SK-N-SH (cell line): ENCODE measurements at regions of chr2 and their contacts with region 1.

Region 1: GRCh38 chr2:64915510-64915900 is 73.7 kb upstream of the SLC1A4 start:
- DNase-seq: no peak
- H3K4me3 ChIP-seq: no peak overlapping the region
- H3K27ac ChIP-seq: no peak overlapping the region
- H3K4me1 ChIP-seq: no peaks in the 10 kb centered on the region
- H3K27me3 ChIP-seq: no peaks in the 10 kb centered on the region
- CTCF ChIP-seq: no peak
- EP300 ChIP-seq: no peak
- RAD21 ChIP-seq: no peak

Region 2: GRCh38 chr2:64523666-64524603 is 391.6 kb before region 1 on chr2 and contains the start of gene AFTPH:
- CTCF ChIA-PET with region 1: interaction called, 10 read pairs
- POLR2A ChIA-PET with region 1: no interaction called
- DNase-seq: peak; percentile 99
- H3K4me3 ChIP-seq: peak within 1 kb of the TSS; percentile 88 to 94
- H3K27ac ChIP-seq: peak within 1 kb of the TSS; percentile 71 to 92
- H3K4me1 ChIP-seq: peaks cover 0 to 6% of the 10 kb centered on the region in 2 experiments; a peak in 2 of 4 replicates
- H3K27me3 ChIP-seq: peaks cover 9% of the 10 kb centered on the region; the same call in 1 of the 2 replicates
- CTCF ChIP-seq: no peak
- EP300 ChIP-seq: 0 out of 4 replicates have a peak, but pooled peaks of 1 of the 2 experiments have one; percentile 7
- RAD21 ChIP-seq: no peak
- polyA plus RNA-seq, gene AFTPH: 7.4 and 9.8 TPM in 2 replicates

Region 3: GRCh38 chr2:64622443-64623241 is 292.9 kb before region 1 on chr2:
- CTCF ChIA-PET with region 1: no interaction called
- POLR2A ChIA-PET with region 1: no interaction called
- DNase-seq: no peak
- H3K4me3 ChIP-seq: no peak overlapping the region
- H3K27ac ChIP-seq: no peak overlapping the region
- H3K4me1 ChIP-seq: peaks cover 0 to 14% of the 10 kb centered on the region in 2 experiments; a peak in 1 of 4 replicates
- H3K27me3 ChIP-seq: no peaks in the 10 kb centered on the region
- CTCF ChIP-seq: no peak
- EP300 ChIP-seq: no peak
- RAD21 ChIP-seq: no peak

Region 4: DNA sequence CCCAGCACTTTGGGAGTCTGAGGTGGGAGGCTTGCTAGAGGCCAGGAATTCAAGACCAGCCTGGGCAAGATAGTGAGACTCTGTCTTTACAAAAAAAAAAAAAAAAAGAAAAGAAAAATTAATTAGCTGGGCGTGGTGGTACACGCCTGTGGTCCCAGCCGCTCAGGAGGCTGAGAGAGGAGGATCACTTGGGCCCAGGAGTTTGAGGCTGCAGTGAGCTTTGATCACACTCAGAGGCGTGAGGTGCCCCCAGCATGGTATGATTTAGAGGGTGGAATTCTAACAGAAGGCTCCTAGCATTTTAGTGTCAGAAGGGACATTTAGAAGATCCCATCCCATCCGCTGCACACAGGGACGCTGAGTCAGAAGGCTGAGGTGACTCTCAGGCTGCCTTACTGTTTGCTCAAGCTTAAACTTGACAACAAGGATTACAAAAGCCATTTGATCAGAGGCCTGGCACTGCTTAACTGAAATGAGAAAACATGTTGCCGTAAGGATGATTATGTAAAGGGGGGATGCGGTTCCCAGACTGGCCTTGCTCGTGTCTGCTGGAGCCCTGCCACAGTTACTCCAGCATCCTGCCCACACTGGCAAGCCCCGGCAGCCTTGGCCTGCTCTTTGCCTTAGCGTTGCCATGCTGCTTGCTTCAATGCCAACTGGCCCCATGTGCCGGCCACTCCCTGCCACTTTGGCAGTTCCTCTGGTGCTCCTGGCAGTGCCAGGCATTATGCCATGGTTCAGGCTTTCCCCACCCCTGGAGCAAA is 28.1 kb after region 1 on chr2:
- CTCF ChIA-PET with region 1: interaction called, 23 read pairs
- POLR2A ChIA-PET with region 1: no interaction called
- DNase-seq: no peak
- H3K4me3 ChIP-seq: no peak overlapping the region
- H3K27ac ChIP-seq: no peak overlapping the region
- H3K4me1 ChIP-seq: no peaks in the 10 kb centered on the region; a peak in 1 of 4 replicates
- H3K27me3 ChIP-seq: no peaks in the 10 kb centered on the region
- CTCF ChIP-seq: no peak
- EP300 ChIP-seq: no peak
- RAD21 ChIP-seq: no peak

Region 5: DNA sequence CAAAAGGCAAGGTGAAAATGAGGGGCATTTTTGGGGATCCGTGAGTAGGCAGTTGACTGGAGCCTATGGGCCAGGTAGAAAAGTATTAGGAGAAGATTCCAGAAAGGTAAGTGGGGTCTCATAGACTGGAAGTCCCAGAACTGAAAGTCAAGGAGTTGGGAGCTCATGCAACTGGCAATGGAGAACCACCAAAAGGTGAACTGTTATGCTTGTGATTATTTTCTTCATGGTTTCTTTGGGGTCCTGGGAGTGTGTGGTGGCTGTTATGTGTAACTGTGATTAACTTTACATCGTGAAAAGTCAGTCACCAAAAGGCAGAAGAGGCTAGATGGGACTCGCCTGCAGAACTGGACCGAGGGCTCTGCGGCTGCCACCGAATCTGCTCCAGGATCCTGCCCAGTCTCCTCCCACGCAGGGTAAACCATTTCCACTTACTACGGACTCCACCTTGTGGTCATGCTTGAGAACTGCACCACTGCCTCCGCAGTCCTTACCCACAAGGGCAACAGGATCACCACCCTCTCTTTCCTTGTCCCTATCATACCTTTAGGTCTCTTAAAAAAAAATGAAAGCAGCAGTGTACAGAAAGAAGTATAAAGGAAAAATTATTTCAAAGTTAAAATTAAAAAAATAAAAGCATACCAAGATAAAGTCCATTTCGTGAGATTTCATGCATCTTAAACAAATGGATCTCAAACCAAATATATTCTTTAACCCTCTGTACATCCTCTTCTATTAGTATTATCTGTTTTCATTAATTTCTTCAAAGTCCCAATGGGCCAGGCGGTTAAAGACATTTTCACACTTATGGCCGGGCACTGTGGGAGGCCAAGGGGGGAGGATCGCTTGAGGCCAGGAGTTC is 125.1 kb after region 1 on chr2:
- CTCF ChIA-PET with region 1: interaction called, 130 read pairs
- POLR2A ChIA-PET with region 1: no interaction called
- DNase-seq: peak; percentile 79
- H3K4me3 ChIP-seq: no peak overlapping the region
- H3K27ac ChIP-seq: no peak overlapping the region
- H3K4me1 ChIP-seq: no peaks in the 10 kb centered on the region
- H3K27me3 ChIP-seq: no peaks in the 10 kb centered on the region
- CTCF ChIP-seq: peak; percentile 88
- EP300 ChIP-seq: no peak
- RAD21 ChIP-seq: peak; percentile 94

Region 6: DNA sequence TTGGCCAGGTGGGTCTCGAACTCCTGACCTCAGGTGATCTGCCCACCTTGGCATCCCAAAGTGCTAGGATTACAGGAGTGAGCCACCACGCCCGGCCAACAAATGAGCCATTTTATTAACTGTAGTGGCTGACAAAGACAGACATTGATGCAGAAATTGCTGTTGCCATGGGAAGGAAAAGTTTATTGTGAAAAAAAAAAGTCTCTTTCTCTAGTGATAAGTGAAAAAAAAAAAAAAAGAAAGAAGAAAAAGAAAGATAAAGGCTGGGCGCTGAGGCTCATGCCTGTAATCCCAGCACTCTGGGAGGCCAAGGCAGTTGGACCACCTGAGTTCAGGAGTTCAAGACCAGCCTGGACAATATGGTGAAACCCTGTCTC is 254.2 kb after region 1 on chr2:
- CTCF ChIA-PET with region 1: interaction called, 13 read pairs
- POLR2A ChIA-PET with region 1: no interaction called
- DNase-seq: no peak
- H3K4me3 ChIP-seq: no peak overlapping the region
- H3K27ac ChIP-seq: no peak overlapping the region
- H3K4me1 ChIP-seq: no peaks in the 10 kb centered on the region
- H3K27me3 ChIP-seq: no peaks in the 10 kb centered on the region
- CTCF ChIP-seq: no peak
- EP300 ChIP-seq: no peak
- RAD21 ChIP-seq: no peak